Activated naive CD4-positive, alpha-beta T cell treated with anti-CD3 and anti-CD28 coated beads for 36 hours (primary cell): ENCODE measurements at regions of chr6 and their contacts with region 1.

Region 1: DNA sequence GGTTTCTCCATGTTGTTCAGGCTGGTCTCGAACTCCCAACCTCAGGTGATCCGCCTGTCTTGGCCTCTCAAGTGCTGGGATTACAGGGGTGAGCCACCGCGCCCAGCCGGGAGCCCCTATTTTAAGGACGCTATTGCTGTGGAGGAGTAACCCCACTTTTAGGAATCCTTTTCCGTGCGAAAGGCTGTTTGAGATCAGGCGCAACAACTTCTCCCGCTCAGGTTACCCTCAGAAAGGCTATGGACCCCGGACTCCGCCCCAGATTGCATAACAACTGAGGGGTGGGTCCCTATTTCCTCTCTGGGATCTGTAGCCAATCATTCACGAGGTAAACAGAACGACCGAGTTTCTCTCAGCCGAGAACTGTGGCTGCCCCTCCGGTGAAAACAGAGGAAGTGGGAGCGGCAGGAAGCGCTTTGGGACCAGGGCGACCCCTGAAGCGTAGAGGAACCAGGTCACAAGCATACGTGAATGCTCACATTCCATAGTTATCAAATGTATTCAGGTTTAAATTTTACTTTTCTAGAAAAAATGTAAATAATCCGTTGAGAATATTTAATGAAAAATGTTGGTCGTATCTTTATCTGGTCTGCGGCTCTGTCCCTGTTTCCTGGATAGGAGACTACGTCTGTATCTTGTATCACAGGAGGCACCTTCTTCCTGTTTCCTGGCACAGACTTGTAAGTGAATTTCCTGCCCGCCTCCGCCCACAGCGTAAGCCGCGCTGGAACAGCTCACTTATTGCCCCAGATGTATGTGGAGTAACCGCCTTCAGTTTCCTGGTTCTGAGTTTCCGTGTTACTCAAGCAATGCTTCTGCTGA is 26.8 kb downstream of the HLA-E start:
- DNase-seq: peak; percentile 98
- H3K4me3 Mint-ChIP-seq: peak overlapping the region; percentile 87
- H3K27ac Mint-ChIP-seq: peak overlapping the region; percentile 99
- H3K4me1 Mint-ChIP-seq: peaks cover 70% of the 10 kb centered on the region
- H3K27me3 Mint-ChIP-seq: no peaks in the 10 kb centered on the region

Region 2: DNA sequence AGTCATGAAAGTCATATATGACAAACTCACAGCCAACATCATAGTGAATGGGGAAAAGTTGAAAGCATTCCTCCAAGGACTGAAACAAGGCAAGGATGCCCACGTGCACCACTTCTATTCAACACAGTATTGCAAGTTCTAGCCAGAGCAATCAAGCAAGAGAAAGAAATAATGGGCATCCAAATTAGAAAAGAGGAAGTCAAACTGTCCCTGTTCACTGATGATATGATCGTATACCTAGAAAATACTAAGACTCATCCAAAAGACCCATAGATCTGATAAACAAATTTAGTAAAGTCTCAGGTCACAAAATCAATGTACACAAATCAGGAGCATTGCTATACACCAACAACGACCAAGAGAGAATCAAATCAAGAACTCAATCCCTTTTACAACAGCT is 130.0 kb before region 1 on chr6:
- CTCF ChIA-PET with region 1: no interaction called
- intact Hi-C with region 1: no loop called
- DNase-seq: no peak
- H3K4me3 Mint-ChIP-seq: no peak overlapping the region
- H3K27ac Mint-ChIP-seq: no peak overlapping the region
- H3K4me1 Mint-ChIP-seq: no peaks in the 10 kb centered on the region
- H3K27me3 Mint-ChIP-seq: peaks cover 63% of the 10 kb centered on the region

Region 3: DNA sequence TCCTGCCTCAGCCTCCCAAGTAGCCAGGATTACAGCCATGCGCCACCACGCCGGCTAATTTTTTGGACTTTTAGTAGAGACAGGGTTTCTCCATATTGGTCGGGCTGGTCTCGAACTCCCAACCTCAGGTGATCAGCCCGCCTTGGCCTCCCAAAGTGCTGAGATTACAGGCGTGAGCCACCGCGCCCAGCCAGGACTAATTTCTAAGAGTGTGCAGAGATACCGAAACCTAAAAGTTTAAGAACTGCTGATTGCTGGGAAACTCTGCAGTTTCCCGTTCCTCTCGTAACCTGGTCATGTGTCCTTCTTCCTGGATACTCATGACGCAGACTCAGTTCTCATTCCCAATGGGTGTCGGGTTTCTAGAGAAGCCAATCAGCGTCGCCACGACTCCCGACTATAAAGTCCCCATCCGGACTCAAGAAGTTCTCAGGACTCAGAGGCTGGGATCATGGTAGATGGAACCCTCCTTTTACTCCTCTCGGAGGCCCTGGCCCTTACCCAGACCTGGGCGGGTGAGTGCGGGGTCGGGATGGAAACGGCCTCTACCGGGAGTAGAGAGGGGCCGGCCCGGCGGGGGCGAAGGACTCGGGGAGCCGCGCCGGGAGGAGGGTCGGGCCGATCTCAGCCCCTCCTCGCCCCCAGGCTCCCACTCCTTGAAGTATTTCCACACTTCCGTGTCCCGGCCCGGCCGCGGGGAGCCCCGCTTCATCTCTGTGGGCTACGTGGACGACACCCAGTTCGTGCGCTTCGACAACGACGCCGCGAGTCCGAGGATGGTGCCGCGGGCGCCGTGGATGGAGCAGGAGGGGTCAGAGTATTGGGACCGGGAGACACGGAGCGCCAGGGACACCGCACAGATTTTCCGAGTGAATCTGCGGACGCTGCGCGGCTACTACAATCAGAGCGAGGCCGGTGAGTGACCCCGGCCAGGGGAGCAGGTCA is 26.8 kb before region 1 on chr6 and contains the start of gene HLA-E:
- CTCF ChIA-PET with region 1: interaction called, 8 read pairs
- intact Hi-C with region 1: loop called (anchors 1 kb)
- DNase-seq: peak; percentile 95
- H3K4me3 Mint-ChIP-seq: peak within 1 kb of the TSS; percentile 90
- H3K27ac Mint-ChIP-seq: peak within 1 kb of the TSS; percentile 97
- H3K4me1 Mint-ChIP-seq: peaks cover 54% of the 10 kb centered on the region
- H3K27me3 Mint-ChIP-seq: no peaks in the 10 kb centered on the region
- total RNA-seq, gene HLA-E: 598 to 608 TPM

Region 4: GRCh38 chr6:30500421-30501355 is 15.5 kb before region 1 on chr6:
- CTCF ChIA-PET with region 1: interaction called, 7 read pairs
- intact Hi-C with region 1: loop called (anchors 1 kb)
- DNase-seq: peak; percentile 50
- H3K4me3 Mint-ChIP-seq: peak overlapping the region; percentile 67
- H3K27ac Mint-ChIP-seq: peak overlapping the region; percentile 87
- H3K4me1 Mint-ChIP-seq: peaks cover 57% of the 10 kb centered on the region
- H3K27me3 Mint-ChIP-seq: no peaks in the 10 kb centered on the region

Region 5: DNA sequence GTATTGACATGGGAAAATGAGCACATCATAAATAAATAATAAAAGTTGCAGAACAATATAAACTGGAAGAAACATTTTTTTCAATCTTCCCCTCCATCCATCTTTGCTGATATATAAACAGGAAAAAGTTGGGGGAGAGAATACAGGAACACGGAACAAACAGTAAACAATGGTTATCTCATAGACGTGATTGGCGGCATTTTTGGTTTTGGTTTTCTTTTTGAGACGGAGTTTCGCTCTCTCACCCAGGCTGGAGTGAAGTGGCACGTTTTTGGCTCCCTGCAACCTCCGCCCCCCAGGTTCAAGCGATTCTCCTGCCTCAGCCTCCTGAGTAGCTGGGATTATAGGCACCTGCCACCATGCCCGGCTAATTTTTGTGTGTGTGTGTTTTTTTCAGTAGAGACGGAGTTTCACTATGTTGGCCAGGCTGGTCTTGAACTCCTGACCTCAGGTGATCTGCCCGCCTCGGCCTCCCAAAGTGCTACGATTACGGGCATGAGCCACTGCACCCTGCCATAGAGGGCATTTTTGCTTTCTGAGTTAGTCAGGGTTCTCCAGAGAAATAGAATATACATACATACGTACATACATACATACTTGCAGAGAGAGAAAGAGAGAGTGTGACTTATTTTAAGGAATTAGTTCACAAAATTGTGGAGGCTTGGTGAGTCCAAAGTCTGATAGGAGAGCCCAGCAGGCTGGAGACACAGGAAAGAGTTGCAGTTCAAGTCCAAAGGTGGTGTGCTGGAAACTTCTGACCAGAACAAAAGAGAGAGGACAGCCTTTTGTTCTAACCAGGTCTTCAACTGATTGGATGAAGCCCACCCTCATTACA is 17.5 kb after region 1 on chr6:
- CTCF ChIA-PET with region 1: interaction called, 21 read pairs
- intact Hi-C with region 1: loop called (anchors 1 kb)
- DNase-seq: no peak
- H3K4me3 Mint-ChIP-seq: peak overlapping the region; percentile 27
- H3K27ac Mint-ChIP-seq: peak overlapping the region; percentile 93
- H3K4me1 Mint-ChIP-seq: peaks cover 49% of the 10 kb centered on the region
- H3K27me3 Mint-ChIP-seq: no peaks in the 10 kb centered on the region

Region 6: GRCh38 chr6:30730601-30731435 is 214.7 kb after region 1 on chr6:
- CTCF ChIA-PET with region 1: no interaction called
- intact Hi-C with region 1: no loop called
- DNase-seq: peak; percentile 94
- H3K4me3 Mint-ChIP-seq: peak overlapping the region; percentile 29
- H3K27ac Mint-ChIP-seq: no peak overlapping the region
- H3K4me1 Mint-ChIP-seq: peaks cover 47% of the 10 kb centered on the region
- H3K27me3 Mint-ChIP-seq: no peaks in the 10 kb centered on the region

Region 7: GRCh38 chr6:31575335-31575901 is 1059.3 kb after region 1 on chr6 and contains the start of gene TNF:
- CTCF ChIA-PET with region 1: no interaction called
- intact Hi-C with region 1: loop called (anchors 10 kb)
- DNase-seq: peak; percentile 87
- H3K4me3 Mint-ChIP-seq: peak within 1 kb of the TSS; percentile 94
- H3K27ac Mint-ChIP-seq: peak within 1 kb of the TSS; percentile 97
- H3K4me1 Mint-ChIP-seq: peaks cover 65% of the 10 kb centered on the region
- H3K27me3 Mint-ChIP-seq: no peaks in the 10 kb centered on the region
- total RNA-seq, gene TNF: 31.6 to 33.2 TPM